MCF 10A (cell line): ENCODE measurements at regions of chr14 and their contacts with region 1.

Region 1: DNA sequence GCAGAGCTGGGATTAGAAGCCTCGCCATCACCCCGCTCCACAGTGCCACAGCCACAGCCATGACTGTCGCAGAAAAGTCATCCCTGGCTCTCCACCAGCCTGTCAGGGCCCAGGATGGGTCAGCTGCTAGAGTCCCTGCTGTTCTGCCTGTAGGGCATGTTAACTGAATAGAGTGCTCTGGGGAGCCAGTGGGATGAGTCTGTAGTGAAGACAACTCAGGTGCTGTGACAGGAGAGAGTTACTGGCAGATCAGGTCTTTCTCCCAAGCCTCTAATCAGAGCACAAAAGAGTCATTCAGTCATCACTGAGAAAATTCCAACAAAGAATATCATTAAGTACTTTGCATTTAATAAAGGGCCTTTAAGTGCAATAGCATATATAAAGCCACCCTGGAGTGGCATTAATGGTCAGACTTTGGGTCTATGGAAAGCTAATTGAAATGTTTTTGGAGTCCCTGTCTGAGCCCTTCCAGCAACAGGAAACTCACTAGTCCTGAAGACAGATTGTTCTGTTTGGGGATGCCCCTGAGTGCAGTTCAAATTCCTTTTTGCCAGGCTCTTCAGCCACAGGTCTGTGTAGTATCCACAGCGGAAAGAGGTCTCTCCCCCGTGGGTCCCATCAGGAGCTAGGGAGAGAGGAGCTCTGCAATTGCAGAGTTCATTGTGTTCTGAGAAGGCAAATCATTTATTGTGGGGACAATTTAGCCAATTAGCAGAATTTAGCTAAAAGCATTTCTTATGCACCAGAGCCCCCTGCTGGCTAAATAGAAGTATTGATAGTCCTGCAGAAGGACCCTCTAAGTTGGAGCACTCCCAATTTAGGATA is 45.2 kb upstream of the C14orf132 start:
- DNase-seq: peak; percentile 69
- H3K4me3 Mint-ChIP-seq: no peak overlapping the region
- H3K27ac Mint-ChIP-seq: no peak overlapping the region
- H3K4me1 Mint-ChIP-seq: no peaks in the 10 kb centered on the region
- H3K27me3 Mint-ChIP-seq: peaks cover 76% of the 10 kb centered on the region
- CTCF ChIP-seq: peak; percentile 95

Region 2: DNA sequence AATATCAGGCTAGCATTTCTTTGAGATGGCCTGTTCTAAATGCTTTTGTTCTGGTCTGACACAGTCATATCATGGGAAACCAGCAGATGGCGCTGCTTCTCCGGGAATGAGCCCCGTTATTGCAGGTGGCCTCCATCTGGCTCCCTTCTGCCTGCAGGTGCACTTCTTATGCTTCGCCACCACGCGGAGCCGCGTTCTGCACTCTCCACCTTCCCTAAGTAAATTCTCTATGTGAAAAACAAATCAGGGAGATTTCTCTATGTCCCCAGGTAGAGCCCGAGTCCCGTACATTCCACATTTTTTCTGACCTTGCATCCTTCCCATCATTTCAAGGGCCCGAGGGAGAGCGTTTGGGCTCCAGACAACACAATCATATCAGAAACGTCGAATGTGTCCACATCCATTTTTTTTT is 433.0 kb before region 1 on chr14:
- CTCF ChIA-PET with region 1: interaction called, 158 read pairs
- POLR2A ChIA-PET with region 1: interaction called, 6 read pairs
- intact Hi-C with region 1: loop called (anchors 1 kb)
- DNase-seq: peak; percentile 88
- H3K4me3 Mint-ChIP-seq: no peak overlapping the region
- H3K27ac Mint-ChIP-seq: no peak overlapping the region
- H3K4me1 Mint-ChIP-seq: no peaks in the 10 kb centered on the region
- H3K27me3 Mint-ChIP-seq: peaks cover 18% of the 10 kb centered on the region
- CTCF ChIP-seq: peak; percentile 96

Region 3: GRCh38 chr14:95774265-95775160 is 219.5 kb before region 1 on chr14:
- CTCF ChIA-PET with region 1: interaction called, 10 read pairs
- POLR2A ChIA-PET with region 1: no interaction called
- intact Hi-C with region 1: loop called (anchors 1 kb)
- DNase-seq: peak; percentile 65
- H3K4me3 Mint-ChIP-seq: no peak overlapping the region
- H3K27ac Mint-ChIP-seq: no peak overlapping the region
- H3K4me1 Mint-ChIP-seq: peaks cover 5% of the 10 kb centered on the region
- H3K27me3 Mint-ChIP-seq: peaks cover 35% of the 10 kb centered on the region
- CTCF ChIP-seq: peak; percentile 85

Region 4: GRCh38 chr14:96038920-96039632 is 45.1 kb after region 1 on chr14 and contains the start of gene C14orf132:
- CTCF ChIA-PET with region 1: no interaction called
- POLR2A ChIA-PET with region 1: no interaction called
- intact Hi-C with region 1: no loop called
- DNase-seq: no peak
- H3K4me3 Mint-ChIP-seq: no peak within 1 kb of the TSS
- H3K27ac Mint-ChIP-seq: no peak within 1 kb of the TSS
- H3K4me1 Mint-ChIP-seq: peaks cover 11% of the 10 kb centered on the region
- H3K27me3 Mint-ChIP-seq: peaks cover 22% of the 10 kb centered on the region
- CTCF ChIP-seq: no peak
- total RNA-seq, gene C14orf132: not detected in 2 replicates

Region 5: DNA sequence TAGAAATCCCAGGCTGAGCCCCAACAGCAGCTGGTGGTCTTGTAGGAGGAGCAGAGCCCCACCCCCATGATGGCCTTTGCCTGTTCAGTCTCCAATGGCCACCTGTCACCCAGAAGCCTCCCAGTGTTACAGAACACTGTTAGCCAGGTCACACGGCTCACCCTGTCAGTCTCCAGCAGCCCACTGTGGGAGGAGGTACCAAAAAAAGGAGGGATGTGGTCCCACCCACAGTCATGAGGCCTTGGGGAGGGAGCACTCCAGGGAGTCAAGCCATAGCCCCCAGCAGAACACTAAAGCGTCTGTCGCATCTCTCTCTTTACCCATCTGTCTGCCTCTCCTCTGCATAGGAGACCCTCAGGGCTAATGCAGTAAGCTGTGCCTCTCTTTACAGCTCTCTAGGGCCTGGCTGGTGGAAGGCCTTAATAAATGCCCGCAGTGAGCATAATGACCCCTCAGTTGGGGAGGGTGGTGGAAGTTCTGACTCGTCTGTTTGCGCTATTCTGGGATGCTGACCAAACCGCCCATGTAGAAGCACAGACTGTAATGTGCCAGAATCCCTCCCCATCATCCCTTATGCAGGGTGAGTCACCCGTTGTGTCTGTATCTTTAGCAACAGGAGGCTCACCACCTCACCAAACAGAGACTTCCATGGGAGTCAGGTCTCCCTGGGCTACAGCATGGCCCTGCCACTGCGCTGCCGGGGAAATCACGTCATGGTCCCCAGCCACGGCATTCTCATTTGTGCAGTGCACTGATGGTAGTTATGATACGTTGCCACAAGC is 59.8 kb after region 1 on chr14:
- CTCF ChIA-PET with region 1: interaction called, 12 read pairs
- POLR2A ChIA-PET with region 1: no interaction called
- intact Hi-C with region 1: loop called (anchors 1 kb)
- DNase-seq: peak; percentile 57
- H3K4me3 Mint-ChIP-seq: no peak overlapping the region
- H3K27ac Mint-ChIP-seq: no peak overlapping the region
- H3K4me1 Mint-ChIP-seq: peaks cover 5% of the 10 kb centered on the region
- H3K27me3 Mint-ChIP-seq: peaks cover 26% of the 10 kb centered on the region
- CTCF ChIP-seq: no peak

Region 6: DNA sequence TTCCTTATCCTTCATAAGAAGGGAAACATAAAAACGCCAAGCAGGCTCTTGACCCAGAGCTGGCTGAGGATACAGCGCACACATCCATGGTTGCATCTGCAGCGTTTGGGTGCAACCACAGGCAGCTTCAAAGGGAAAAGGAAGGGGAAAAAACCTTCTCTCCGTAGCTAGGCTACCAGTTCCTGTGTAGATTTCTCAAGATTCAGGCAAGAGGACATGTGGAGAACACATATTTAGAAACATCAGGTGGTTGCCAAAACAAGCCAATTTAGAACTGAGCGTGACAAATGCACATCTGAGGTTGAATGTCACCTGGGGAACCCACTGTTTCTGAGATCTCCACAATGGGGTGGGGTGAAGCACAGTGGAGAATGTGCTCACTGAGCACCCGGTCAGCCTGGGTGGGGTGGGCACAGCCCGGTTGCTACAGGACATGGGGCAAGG is 132.4 kb after region 1 on chr14:
- CTCF ChIA-PET with region 1: no interaction called
- POLR2A ChIA-PET with region 1: no interaction called
- intact Hi-C with region 1: no loop called
- DNase-seq: no peak
- H3K4me3 Mint-ChIP-seq: no peak overlapping the region
- H3K27ac Mint-ChIP-seq: no peak overlapping the region
- H3K4me1 Mint-ChIP-seq: peaks cover 13% of the 10 kb centered on the region
- H3K27me3 Mint-ChIP-seq: no peaks in the 10 kb centered on the region
- CTCF ChIP-seq: no peak

Region 7: DNA sequence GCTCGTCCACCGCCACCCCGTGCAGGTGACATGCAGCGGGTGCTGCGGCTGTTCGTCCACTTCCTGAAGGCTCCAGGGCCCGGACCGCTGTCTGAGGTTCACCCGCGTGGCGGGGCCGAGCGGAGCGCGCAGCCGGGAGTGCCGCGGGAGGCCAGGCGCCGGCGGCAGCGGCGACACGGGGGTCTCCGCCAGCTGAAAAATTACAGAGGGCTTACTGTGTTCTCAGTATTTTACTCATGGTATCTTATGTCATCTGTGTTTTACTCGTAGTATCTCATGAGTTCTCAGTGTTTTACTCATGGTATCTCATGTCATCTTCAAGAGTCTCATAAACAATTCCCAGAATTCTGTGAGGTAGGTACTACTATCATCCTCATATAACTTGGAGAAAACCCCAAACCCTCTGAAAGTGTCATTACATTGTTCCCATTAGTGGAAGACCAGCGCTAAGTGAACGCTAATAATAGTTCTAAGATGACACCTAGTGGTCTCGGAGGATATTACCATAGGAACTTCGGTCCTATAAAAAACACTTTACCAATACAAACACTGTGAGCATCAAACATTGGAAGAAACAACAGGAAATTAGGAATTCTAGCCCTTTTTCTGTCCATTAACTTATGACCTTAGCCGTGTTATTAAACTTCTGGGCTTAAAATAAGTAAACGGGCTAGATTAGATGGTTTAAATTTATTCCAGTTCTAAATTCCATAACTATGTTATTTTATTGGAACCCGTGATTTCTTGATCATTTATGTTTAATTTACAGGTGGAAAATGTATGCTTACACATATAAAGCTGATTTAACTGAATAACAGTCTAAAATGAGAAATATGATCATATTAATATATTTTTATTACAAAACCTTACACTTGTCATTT is 430.4 kb after region 1 on chr14:
- CTCF ChIA-PET with region 1: no interaction called
- POLR2A ChIA-PET with region 1: no interaction called
- intact Hi-C with region 1: loop called (anchors 5 kb)
- DNase-seq: peak; percentile 74
- H3K4me3 Mint-ChIP-seq: peak overlapping the region; percentile 64
- H3K27ac Mint-ChIP-seq: no peak overlapping the region
- H3K4me1 Mint-ChIP-seq: no peaks in the 10 kb centered on the region
- H3K27me3 Mint-ChIP-seq: no peaks in the 10 kb centered on the region
- CTCF ChIP-seq: peak; percentile 66